Right lobe of liver (tissue), 6 donors: ENCODE measurements at regions of chr10 and their contacts with region 1.

Region 1: DNA sequence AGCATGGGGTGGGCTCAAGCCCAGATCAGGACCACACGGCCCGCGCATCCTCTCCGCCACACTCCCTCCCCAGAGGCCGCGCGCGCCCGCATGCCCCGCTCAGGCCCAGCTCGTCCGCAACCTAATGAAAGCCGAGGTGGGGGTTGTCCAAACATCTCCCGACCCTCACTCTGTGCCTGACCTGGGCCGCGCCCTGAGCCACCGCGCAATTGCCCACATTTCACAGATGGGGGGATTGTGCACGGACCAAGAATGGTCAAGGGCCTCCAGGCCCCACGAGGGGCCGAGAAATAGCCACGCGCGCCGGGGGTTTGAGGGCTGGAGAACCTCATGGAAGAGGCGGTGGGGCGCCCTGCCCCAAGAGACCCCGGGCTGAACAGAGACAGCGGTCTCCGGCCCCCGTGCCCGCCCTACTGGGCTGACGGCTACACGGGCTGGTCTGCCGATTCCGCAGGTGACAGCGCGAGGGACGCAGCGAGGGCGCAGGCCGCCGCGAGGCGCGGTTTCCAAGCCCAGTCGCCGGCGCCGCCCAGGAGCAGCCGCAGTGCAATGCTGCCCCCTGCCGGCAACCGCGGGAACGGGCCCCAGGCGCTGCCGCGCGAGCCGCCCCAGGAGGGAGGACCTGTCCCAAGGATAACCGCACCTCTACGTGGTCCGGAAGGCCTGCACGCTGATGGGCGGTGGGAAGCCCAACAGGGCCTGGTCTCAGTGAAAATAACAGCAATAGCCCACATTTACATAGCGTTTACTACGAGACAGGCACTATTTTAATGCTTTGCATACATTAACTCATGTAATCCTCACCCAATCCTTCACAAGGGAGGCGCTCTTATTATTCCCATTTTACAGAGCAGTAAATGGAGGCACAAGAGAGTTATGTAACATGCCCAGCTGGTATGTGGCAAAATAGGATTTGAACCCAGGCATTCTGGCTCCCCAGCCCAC is 10.5 kb upstream of the GRID1 start:
- DNase-seq: peak; percentile 80 to 81 (median 80)
- ATAC-seq: peak; percentile 95 to 99 (median 98)
- H3K4me3 ChIP-seq: peak overlapping the region in 1 of 3 donors; percentile 24
- H3K27ac ChIP-seq: no peak overlapping the region
- H3K4me1 ChIP-seq: peaks cover 0 to 4% (median 0%) of the 10 kb centered on the region in 4 donors
- H3K27me3 ChIP-seq: no peaks in the 10 kb centered on the region
- CTCF ChIP-seq: peak; percentile 99 to 100 (median 100)
- POLR2A ChIP-seq: no peak

Region 2: DNA sequence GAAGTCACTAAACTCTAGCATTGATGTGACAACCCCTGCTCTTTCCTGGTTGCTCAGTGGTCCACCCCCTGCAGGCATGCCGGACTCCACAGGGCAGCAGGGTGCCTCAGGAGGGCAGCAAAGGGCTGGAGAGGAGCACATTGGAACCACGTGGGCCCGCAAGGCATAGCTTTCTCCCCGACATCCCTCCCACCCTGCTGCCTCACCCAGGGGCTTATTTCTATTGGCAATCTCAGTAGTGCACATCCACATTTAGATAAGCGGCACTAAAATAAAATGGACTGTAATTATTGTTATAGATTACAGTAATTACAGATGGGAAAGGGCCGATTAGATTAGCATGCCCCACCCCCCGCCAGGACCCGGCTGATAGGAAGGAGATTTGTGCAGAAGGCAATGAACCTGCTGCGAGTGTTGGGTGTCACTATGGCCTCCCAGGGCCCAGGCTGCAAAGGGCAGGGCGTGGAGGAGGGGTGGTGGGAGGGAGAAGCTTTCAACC is 590.7 kb before region 1 on chr10:
- intact Hi-C with region 1: loop called in 1 of 2 experiments (anchors 10 kb)
- DNase-seq: peak in 2 of 3 donors; percentile 57 to 65
- ATAC-seq: peak; percentile 75 to 85 (median 76)
- H3K4me3 ChIP-seq: no peak overlapping the region
- H3K27ac ChIP-seq: no peak overlapping the region
- H3K4me1 ChIP-seq: no peaks in the 10 kb centered on the region
- H3K27me3 ChIP-seq: no peaks in the 10 kb centered on the region
- CTCF ChIP-seq: peak; percentile 17 to 53 (median 47)
- POLR2A ChIP-seq: no peak

Region 3: GRCh38 chr10:86100581-86101061 is 276.5 kb before region 1 on chr10:
- intact Hi-C with region 1: loop called (anchors 10 kb)
- DNase-seq: no peak
- ATAC-seq: peak; percentile 82 to 96 (median 90)
- H3K4me3 ChIP-seq: no peak overlapping the region
- H3K27ac ChIP-seq: no peak overlapping the region
- H3K4me1 ChIP-seq: no peaks in the 10 kb centered on the region
- H3K27me3 ChIP-seq: no peaks in the 10 kb centered on the region
- CTCF ChIP-seq: peak; percentile 58 to 70 (median 66)
- POLR2A ChIP-seq: no peak

Region 4: DNA sequence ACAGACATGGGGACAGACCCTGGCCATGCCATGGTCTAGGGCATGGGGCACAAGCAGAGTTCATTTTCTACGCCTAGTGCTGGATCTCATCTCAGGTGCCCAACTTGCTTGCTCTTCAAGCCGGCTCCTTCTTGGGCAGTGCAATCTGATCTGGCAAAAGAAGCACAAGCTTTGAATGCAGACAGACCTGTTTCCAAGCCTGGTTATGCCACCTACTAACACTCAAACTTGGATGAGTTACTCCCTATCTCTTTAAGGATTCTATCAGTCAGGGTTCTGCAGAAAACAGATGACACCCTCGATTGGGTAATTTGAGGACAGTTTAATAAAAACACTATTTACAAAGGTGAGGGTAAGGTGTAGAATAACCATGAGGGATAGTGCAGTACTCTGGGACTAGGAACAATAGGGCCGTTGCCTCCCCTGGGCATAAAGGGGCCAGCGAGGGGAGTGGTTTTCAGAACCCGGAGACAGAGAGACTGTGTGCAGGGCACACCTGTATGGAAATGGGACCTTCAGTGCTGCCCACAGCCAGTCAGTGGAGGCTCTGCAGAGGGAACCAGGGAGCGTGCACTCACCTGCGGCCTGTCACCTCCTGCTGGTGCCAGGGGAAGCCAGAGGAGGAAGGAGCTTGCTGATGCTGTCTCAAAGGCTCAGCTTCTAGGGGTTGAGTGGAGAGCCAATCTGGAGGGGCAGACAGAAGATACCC is 179.6 kb after region 1 on chr10:
- intact Hi-C with region 1: no loop called
- DNase-seq: no peak
- ATAC-seq: peak in 1 of 4 donors; percentile 16
- H3K4me3 ChIP-seq: no peak overlapping the region
- H3K27ac ChIP-seq: no peak overlapping the region
- H3K4me1 ChIP-seq: no peaks in the 10 kb centered on the region
- H3K27me3 ChIP-seq: no peaks in the 10 kb centered on the region
- CTCF ChIP-seq: no peak
- POLR2A ChIP-seq: no peak